Activated T-helper 1 cell treated with anti-CD3 and anti-CD28 coated beads, Interleukin-12 subunit alpha, Interleukin-12 subunit beta, Interleukin-2, Interleukin-4 antibody, amounts not matched to agents 30 ng/mL and 10 ng/mL and 1 ng/mL, durations not matched to agents 14 hours and 24 hours and 36 hours (primary cell): ENCODE measurements at regions of chr1 and their contacts with region 1.

Region 1: GRCh38 chr1:91404151-91405012 is at the start of gene HFM1:
- DNase-seq: peak; percentile 31
- H3K4me3 Mint-ChIP-seq: peak within 1 kb of the TSS; percentile 77
- H3K27ac Mint-ChIP-seq: peak within 1 kb of the TSS; percentile 23
- H3K4me1 Mint-ChIP-seq: peaks cover 5% of the 10 kb centered on the region
- H3K27me3 Mint-ChIP-seq: peaks cover 67% of the 10 kb centered on the region
- total RNA-seq, gene HFM1: not detected in 2 replicates

Region 2: DNA sequence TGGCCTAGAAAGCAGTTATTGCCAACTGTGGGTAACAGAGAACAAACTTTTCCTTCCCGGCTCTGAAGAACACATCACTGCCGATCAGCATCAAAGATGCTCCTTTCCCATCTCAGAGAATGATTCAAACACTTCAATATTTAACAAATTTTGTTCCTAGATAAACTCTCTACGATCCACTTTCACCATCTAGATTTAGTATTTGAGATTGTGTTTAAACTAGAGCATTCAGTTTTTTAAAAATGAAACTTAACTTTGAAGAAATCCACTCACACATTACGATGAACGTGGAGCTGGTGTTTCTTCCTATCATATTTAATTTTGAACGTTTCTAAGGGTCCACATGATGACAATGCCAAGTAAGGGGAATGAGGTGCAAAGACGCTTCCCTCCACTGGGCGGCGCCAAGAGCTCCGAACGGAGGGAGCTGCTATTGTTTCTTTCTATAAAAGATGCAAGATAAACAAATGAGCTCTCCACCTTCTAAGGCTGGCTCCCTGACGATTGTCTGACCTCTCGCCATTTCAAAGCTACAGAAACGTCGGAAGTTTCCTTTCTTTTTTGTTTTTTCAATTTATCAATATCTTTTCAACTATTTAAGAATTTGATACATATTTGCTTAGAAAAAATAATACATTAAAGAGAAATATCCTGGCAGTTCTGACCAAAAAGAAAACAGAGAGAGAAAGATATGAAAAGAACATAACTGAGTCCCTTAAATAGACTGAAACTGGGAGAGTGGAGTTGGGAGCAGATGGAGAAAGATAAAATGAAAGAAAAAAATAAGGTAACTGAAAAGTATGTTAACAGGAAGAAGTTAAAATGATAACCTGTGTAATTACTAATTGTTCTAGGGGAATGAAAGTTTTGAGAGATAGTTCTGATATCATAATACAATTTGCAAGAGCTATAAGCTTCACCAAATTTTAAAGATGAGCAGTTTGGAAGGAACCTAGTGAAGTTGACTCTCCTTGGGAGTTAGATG is 682.9 kb before region 1 on chr1:
- intact Hi-C with region 1: loop called (anchors 10 kb)
- DNase-seq: peak; percentile 35
- H3K4me3 Mint-ChIP-seq: no peak overlapping the region
- H3K27ac Mint-ChIP-seq: peak overlapping the region; percentile 31
- H3K4me1 Mint-ChIP-seq: peaks cover 32% of the 10 kb centered on the region
- H3K27me3 Mint-ChIP-seq: peaks cover 85% of the 10 kb centered on the region

Region 3: GRCh38 chr1:91282695-91283420 is 121.5 kb before region 1 on chr1:
- intact Hi-C with region 1: loop called (anchors 1 kb)
- DNase-seq: peak; percentile 7
- H3K4me3 Mint-ChIP-seq: no peak overlapping the region
- H3K27ac Mint-ChIP-seq: no peak overlapping the region
- H3K4me1 Mint-ChIP-seq: no peaks in the 10 kb centered on the region
- H3K27me3 Mint-ChIP-seq: peaks cover 13% of the 10 kb centered on the region

Region 4: DNA sequence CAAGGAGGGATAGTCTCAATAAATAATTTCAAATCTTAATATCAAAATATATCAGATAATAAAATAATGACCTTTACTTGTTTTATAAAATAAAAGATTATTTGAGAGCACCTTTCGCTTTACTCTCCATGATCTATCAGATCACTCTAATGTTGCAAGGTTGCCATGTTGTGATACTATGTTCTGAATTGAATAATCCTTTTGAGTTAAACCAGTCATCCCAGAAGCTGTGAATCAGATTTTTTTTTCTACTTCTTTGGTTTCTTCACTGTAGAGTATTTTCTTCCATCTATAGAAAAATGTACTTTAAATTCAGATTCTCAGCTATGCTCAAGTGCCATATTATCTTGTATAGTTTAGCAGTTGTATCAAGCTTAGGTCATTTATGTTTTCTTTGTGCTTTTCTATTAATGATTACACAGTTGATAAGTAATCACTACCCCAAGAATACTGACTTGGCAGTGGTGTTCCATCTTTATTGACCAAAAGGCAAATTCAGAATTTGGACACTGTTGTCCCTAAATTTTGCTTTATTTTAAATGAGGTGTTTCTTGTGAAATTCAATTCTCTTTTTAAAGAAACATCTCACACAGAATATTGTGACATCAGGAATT is 577.7 kb after region 1 on chr1:
- intact Hi-C with region 1: no loop called
- DNase-seq: no peak
- H3K4me3 Mint-ChIP-seq: no peak overlapping the region
- H3K27ac Mint-ChIP-seq: no peak overlapping the region
- H3K4me1 Mint-ChIP-seq: no peaks in the 10 kb centered on the region
- H3K27me3 Mint-ChIP-seq: peaks cover 10% of the 10 kb centered on the region